ENCODE measurements at regions of chr14 and their contacts with region 1.

Region 1: DNA sequence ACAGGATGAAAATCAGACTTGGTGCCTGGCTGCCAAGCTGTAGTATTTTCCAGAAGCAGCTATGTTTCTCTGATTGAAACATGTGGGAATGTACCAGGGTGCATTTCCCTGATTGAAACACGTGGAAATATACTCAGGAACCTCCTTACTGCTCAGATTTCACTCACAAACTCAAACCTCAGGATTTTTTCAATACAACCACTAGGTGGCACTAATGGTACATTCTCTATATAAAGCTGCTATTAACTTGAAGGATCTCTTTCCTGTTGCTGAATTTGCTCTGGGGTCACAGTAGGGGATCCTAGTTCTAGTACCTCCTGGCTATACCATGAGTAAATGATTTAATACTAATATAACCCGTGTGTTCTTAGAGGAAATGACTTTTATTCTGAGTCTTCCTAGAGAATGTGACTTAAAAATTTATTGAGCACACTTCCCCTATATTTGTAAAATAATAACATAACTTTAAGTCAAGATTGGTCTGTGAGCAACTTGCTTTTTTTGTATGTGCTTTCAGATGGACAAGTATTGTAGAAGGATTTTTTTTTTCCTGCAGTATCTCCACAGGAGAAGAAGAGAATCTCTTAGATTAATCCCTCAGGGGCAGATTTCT is 173.8 kb upstream of the MIS18BP1 start:
- DNase-seq: no peak
- ATAC-seq: peak; percentile 54

Region 2: GRCh38 chr14:45284802-45285201 is 142.0 kb before region 1 on chr14:
- intact Hi-C with region 1: loop called (anchors 5 kb)
- DNase-seq: no peak
- ATAC-seq: no peak

Region 3: DNA sequence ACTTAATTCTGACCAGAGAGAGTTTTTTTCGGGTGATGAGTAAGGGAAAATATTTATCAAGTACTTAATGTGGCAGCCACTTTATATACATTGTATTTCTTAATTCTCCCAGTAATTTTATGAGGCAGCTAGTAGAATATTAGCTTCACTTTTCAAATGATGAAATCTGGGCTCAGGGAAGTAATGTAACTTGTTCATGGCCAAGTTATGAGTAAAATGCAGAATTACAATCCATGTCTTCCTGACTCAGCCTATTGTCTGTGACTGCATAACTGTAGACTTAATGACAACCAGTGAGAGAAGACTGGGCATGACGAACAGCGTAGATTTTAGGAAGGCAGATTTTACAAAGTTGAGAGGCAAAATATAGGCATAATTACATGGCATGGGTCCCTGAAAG is 67.0 kb before region 1 on chr14:
- intact Hi-C with region 1: no loop called
- DNase-seq: no peak
- ATAC-seq: no peak

Region 4: DNA sequence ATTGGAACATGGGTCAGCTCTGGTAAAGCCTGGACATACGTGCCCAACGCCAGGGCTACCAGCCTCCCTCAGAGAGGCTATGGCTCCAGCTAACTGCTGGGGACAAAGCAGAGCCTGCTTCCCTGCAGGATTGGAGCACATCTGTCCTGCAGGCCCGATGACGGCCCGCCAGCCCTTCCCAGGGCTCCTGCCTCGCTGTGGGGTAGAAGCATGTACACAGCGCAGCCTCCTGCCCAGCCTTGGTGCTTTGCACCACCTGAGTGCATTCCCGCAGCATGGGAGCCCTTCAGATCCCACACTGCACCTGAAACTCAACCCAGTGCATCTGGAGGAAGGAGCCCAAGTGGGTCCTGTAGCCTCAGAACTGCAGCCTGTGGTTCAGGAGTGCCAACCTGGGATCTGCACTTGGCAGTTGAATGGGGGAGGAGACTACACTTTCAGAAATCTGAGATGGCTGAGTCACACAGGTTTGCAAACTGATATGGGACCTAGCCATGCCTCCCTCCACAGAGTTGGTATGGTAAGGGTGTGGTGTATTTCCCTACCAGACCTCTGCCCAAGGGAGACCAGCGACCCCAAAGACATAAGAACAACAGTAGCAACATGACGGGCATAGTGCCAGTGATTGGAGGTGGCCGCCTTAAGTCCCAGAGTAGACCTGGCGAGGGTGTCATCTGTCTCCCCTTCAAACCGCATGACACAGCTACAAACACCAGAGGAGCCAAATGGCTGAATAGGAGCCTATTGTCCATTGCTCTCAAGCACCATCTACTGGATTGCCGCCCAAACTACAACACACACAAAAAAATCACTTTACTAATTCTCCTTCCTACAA is 100.2 kb after region 1 on chr14:
- intact Hi-C with region 1: loop called (anchors 2 kb)
- DNase-seq: no peak
- ATAC-seq: peak; percentile 75

Region 5: GRCh38 chr14:45553981-45554380 is 127.2 kb after region 1 on chr14:
- intact Hi-C with region 1: no loop called
- DNase-seq: no peak
- ATAC-seq: no peak

Measured in left ventricle myocardium superior (tissue), 1 donor.